KBM-7 (cell line): ENCODE measurements at regions of chr9 and their contacts with region 1.

Region 1: GRCh38 chr9:98315551-98316060 is 60.2 kb upstream of the TBC1D2 start:
- DNase-seq: peak; percentile 78

Region 2: DNA sequence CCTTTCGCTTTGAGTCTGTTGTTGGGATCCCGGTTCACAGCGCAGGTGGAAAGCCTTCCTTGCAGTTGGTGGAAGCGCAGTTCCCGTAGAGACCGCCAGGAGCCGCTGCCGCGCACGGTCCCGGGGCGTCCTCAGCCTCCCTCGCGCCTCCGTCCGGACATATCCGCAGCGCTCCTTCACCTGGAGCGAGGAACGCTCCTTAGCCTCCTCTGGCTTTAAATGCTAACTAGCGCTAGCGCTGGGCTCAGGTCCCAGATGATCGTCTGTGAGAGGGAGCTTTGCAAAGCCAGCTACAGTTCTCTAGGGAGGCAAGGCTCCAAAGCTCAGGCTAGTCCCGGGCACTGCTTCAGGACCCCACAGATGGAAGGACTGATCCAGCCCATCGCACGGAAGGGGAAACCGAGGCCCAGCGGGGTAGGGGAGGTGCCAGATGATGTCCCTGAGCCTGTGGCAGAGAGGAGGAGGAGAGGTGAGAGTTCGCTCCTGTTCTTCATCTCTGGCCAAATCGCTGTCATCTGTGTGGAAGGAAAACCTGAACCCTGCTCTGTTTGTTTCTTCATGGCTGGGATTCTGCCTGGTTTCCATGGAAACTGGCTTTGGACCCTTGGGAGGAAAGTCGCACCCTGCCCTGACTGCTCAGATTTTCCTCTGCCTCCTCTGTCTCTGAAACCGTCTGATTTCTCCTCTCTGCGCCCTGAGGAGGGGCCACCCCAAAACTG is 659.5 kb after region 1 on chr9:
- in situ Hi-C with region 1: loop called (anchors 25 kb)
- DNase-seq: peak; percentile 72